Right cardiac atrium (tissue), 5 donors: ENCODE measurements at regions of chr1 and their contacts with region 1.

Region 1: GRCh38 chr1:84944767-84945486 is 51.9 kb upstream of the LPAR3 start:
- DNase-seq: peak; percentile 46 to 58 (median 56)
- ATAC-seq: peak; percentile 95 to 98
- H3K4me3 ChIP-seq: peak overlapping the region; percentile 76
- H3K27ac ChIP-seq: no peak overlapping the region
- H3K4me1 ChIP-seq: no peaks in the 10 kb centered on the region
- H3K27me3 ChIP-seq: no peaks in the 10 kb centered on the region

Region 2: DNA sequence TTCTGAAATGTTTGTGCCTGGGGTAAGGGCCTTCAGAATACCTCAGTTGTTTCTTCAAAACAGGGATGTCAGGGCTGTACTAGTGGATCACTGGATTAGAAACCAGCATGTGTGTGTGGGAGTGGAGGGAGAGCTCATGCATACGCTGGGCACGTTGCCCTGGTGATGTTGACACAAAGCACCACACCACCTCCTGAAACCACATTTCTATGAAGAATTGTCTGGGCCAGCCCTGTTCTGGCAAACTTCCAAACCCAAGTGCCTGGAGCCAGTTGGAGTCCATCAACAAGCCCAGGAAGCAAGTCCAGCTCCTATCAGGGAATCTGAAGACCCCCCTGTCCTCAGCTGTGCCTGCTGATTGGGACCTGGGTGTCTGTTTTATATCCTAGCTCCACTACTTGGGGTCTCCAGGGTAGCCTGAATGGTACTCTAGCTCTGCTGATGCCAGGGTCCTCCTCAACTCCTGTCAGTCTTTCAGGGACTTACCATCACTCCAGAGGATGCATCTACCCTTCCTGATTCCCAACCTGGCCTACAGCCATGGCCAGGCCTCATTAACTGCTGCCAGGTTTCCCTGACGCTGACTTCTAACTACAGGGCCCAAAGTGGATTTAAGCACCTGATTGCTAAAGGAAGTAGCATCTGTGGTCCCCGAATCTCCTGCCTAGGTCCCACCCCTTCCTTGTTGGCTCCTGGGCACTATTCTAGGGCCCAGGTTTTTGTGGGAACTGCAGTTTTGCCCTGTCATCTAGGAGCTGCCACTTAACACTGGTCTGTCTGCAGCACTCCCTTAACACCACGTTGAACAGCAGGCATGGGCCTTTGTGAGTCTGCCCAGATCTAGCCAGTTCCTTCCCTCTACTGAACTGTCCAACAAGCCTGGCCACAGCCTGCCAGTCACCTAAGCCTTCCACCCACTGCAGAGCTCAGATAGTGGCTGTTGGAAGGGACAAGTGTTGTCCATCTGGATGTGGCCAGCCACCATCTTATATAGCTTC is 97.4 kb before region 1 on chr1:
- intact Hi-C with region 1: no loop called
- DNase-seq: peak; percentile 71 to 88 (median 82)
- ATAC-seq: peak; percentile 80 to 85
- H3K4me3 ChIP-seq: no peak overlapping the region
- H3K27ac ChIP-seq: peak overlapping the region; percentile 90
- H3K4me1 ChIP-seq: peaks cover 12% of the 10 kb centered on the region
- H3K27me3 ChIP-seq: no peaks in the 10 kb centered on the region

Region 3: GRCh38 chr1:85027242-85027983 is 82.5 kb after region 1 on chr1:
- intact Hi-C with region 1: loop called in 1 of 4 experiments (anchors 5 kb)
- DNase-seq: no peak
- ATAC-seq: peak; percentile 47 to 72
- H3K4me3 ChIP-seq: no peak overlapping the region
- H3K27ac ChIP-seq: no peak overlapping the region
- H3K4me1 ChIP-seq: no peaks in the 10 kb centered on the region
- H3K27me3 ChIP-seq: no peaks in the 10 kb centered on the region

Region 4: GRCh38 chr1:85078903-85079302 is 134.0 kb after region 1 on chr1:
- intact Hi-C with region 1: loop called in 3 of 4 experiments (anchors 10 kb)
- DNase-seq: no peak
- ATAC-seq: peak; percentile 40 to 63
- H3K4me3 ChIP-seq: no peak overlapping the region
- H3K27ac ChIP-seq: no peak overlapping the region
- H3K4me1 ChIP-seq: no peaks in the 10 kb centered on the region
- H3K27me3 ChIP-seq: no peaks in the 10 kb centered on the region

Region 5: DNA sequence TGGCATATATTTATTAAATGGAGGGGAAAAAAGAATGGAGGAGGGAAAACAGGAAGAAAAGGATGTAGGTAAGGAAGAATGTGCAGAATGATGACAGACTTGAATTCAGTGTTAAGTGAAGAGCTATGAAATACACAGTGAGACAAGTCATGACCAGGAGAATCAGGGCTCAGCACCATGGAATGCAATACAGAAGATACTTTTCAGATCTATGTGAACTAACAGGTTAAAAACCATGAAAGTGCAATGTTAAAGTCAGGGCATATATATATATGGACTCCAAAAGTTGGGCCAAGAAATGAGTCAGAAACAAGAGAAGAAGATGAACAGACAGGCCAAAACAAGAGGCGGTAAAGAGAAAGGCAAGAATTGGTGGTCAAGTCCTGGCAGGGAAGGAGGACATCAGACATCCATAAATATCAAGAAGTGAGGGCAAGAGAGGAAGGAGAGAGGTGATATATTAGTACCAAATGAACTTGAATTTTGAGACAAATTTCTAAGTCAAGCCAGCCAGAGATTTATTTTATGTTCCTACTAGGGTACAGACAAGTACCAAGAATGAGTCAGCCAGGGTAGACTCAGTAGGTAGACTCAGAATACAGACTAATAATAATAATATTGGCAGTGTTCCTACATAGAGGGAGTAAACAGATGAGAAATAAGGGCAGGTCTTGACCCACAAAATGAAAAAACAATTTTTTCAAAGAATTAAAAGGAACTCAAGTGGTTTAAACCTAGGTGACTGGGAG is 142.9 kb after region 1 on chr1:
- intact Hi-C with region 1: loop called in 1 of 4 experiments (anchors 10 kb)
- DNase-seq: no peak
- ATAC-seq: no peak
- H3K4me3 ChIP-seq: no peak overlapping the region
- H3K27ac ChIP-seq: no peak overlapping the region
- H3K4me1 ChIP-seq: no peaks in the 10 kb centered on the region
- H3K27me3 ChIP-seq: no peaks in the 10 kb centered on the region

Region 6: GRCh38 chr1:85259118-85259911 is 314.4 kb after region 1 on chr1 and contains the start of gene C1orf52:
- intact Hi-C with region 1: loop called (anchors 5 to 10 kb)
- DNase-seq: peak; percentile 96 to 99 (median 99)
- ATAC-seq: peak; percentile 97
- H3K4me3 ChIP-seq: peak within 1 kb of the TSS; percentile 96
- H3K27ac ChIP-seq: peak within 1 kb of the TSS; percentile 89
- H3K4me1 ChIP-seq: no peaks in the 10 kb centered on the region
- H3K27me3 ChIP-seq: no peaks in the 10 kb centered on the region
- total RNA-seq, gene C1orf52: 15.8 to 20.1 (median 17.9) TPM